ENCODE measurements at regions of chr2 and their contacts with region 1.

Region 1: DNA sequence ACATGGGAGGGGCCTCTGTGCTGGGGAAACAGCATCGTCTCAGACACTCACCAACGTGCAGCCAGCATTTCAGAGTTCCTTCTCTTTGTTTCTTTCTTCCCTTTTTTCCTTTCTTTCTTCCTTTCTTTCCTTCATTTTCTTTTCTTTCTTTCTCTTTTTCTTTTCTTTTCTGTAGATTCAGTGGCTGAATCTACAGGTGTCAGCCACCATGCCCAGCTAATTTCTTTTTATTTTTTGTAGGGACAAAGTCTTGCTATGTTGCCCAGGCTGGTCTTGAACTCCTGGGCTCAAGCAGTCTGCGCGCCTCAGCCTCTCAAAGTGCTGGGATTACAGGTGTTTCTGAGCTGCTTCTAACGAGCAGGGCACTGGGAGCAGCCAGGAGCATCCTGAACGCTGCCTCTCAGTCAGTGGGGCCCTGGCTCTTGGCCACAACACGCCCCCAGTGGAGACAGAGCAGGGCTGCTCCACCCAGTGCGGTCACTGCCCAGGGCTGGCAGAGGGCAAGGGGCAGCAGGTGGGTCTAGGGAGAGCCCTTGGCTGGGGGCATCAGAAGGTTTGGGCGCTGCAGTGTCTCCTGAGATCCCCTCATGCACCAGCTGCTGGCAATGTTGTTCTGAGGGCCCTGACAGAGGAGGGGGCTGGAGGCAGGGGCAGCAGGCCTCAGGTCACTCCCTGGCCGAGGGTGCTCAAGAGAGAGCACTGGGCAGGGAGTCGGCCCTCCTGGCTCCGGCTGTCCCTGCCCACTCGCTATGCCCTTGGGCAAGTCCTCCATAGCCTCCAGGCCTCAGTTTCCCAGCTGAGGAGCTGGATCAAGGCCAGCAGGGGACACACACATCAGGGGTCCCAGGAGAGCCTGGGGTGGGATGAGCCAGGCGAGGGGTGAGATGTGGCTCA is 4.7 kb upstream of the KLHL30 start:
- DNase-seq: no peak
- H3K4me3 ChIP-seq: no peak overlapping the region
- H3K27ac ChIP-seq: no peak overlapping the region
- H3K4me1 ChIP-seq: peaks cover 0 to 25% (median 20%) of the 10 kb centered on the region in 4 donors
- H3K27me3 ChIP-seq: no peaks in the 10 kb centered on the region
- CTCF ChIP-seq: no peak

Region 2: GRCh38 chr2:238060542-238061314 is 73.0 kb before region 1 on chr2 and contains the start of gene SCLY:
- intact Hi-C with region 1: loop called (anchors 5 kb)
- DNase-seq: peak; percentile 95 to 99
- H3K4me3 ChIP-seq: peak within 1 kb of the TSS; percentile 69 to 89
- H3K27ac ChIP-seq: peak within 1 kb of the TSS; percentile 85 to 90
- H3K4me1 ChIP-seq: peaks cover 0 to 17% (median 10%) of the 10 kb centered on the region in 4 donors
- H3K27me3 ChIP-seq: no peaks in the 10 kb centered on the region
- CTCF ChIP-seq: no peak

Region 3: GRCh38 chr2:238288650-238289573 is 155.2 kb after region 1 on chr2:
- intact Hi-C with region 1: no loop called
- DNase-seq: peak; percentile 99
- H3K4me3 ChIP-seq: peak overlapping the region; percentile 86 to 90
- H3K27ac ChIP-seq: peak overlapping the region; percentile 98 to 99
- H3K4me1 ChIP-seq: peaks cover 0 to 48% (median 43%) of the 10 kb centered on the region in 4 donors
- H3K27me3 ChIP-seq: no peaks in the 10 kb centered on the region
- CTCF ChIP-seq: peak; percentile 19 to 20

Measured in tibial artery (tissue), 4 donors.